Activated CD4-positive, alpha-beta T cell treated with anti-CD3 and anti-CD28 coated beads, Interleukin-2, amount 10 ng/mL, durations not matched to agents 24 days and 14 days (primary cell): ENCODE measurements at regions of chrX and their contacts with region 1.

Region 1: GRCh38 chrX:153819384-153820040 is 10.8 kb downstream of the PDZD4 start:
- DNase-seq: no peak
- H3K4me3 Mint-ChIP-seq: peak overlapping the region; percentile 47
- H3K27ac Mint-ChIP-seq: no peak overlapping the region
- H3K4me1 Mint-ChIP-seq: peaks cover 23% of the 10 kb centered on the region
- H3K27me3 Mint-ChIP-seq: peaks cover 15% of the 10 kb centered on the region

Region 2: GRCh38 chrX:153763989-153764755 is 55.3 kb before region 1 on chrX and contains the start of gene PLXNB3:
- intact Hi-C with region 1: no loop called
- DNase-seq: peak; percentile 92
- H3K4me3 Mint-ChIP-seq: no peak within 1 kb of the TSS
- H3K27ac Mint-ChIP-seq: no peak within 1 kb of the TSS
- H3K4me1 Mint-ChIP-seq: peaks cover 6% of the 10 kb centered on the region
- H3K27me3 Mint-ChIP-seq: no peaks in the 10 kb centered on the region
- total RNA-seq, gene PLXNB3: 0.43 and 0.49 TPM in 2 replicates

Region 3: GRCh38 chrX:153875391-153876111 is 56.0 kb after region 1 on chrX:
- intact Hi-C with region 1: loop called (anchors 5 kb)
- DNase-seq: peak; percentile 93
- H3K4me3 Mint-ChIP-seq: no peak overlapping the region
- H3K27ac Mint-ChIP-seq: no peak overlapping the region
- H3K4me1 Mint-ChIP-seq: peaks cover 18% of the 10 kb centered on the region
- H3K27me3 Mint-ChIP-seq: peaks cover 17% of the 10 kb centered on the region

Region 4: DNA sequence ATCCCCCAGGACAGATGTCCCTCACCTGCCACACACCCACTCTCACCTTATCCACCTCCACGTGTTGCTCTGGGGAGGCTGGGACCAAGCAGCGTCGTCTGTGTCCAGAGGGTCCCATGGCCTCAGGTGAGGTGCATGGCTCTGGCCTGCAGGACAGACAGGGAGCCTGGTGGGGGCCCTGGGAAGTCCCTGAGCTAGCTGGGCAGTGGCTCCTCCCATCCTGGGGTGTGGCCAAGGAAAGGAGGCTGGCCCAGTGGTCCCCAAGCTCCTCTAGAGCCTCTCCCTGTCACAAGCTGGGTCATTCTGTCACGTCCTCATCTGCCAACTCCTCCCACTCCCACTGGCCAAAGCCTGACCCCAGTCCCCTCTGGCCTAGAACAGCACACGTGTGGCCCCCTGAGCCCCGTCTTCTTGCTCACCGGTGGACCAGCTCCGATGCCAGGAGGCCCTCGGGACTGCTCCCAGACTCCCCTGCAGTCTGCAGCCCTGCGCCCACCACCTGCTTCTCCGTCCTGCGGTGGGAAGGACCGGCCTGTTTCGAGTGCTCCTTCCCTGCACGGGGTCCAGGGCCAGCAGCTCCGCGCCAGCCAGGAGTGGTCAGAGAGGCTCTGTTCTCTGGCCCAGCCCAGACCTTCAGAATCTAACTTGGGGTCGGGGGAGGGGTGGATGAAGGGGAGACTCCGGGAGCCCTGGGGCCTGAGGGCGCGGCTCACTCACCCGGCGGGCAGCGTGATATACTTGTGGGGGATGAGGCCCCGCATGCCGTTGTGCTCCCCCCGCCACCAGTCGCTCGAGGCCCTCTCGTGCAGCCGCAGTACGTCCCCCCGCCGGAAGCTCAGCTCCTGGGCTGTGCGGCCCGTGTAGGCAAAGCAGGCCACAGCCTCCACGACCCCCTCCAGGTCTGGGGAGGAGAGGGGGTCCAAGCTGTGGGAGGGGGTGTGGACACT is 89.8 kb after region 1 on chrX:
- intact Hi-C with region 1: no loop called
- DNase-seq: peak; percentile 72
- H3K4me3 Mint-ChIP-seq: no peak overlapping the region
- H3K27ac Mint-ChIP-seq: no peak overlapping the region
- H3K4me1 Mint-ChIP-seq: no peaks in the 10 kb centered on the region
- H3K27me3 Mint-ChIP-seq: no peaks in the 10 kb centered on the region